Pancreas (tissue), 10 donors: ENCODE measurements at regions of chr1 and their contacts with region 1.

Region 1: GRCh38 chr1:28208818-28209441 is 23.9 kb downstream of the DNAJC8 start:
- DNase-seq: peak in 3 of 6 donors; percentile 25 to 50 (median 42)
- ATAC-seq: peak; percentile 69 to 94 (median 92)
- H3K4me3 ChIP-seq: no peak overlapping the region
- H3K27ac ChIP-seq: no peak overlapping the region
- H3K4me1 ChIP-seq: peaks cover 0 to 4% (median 0%) of the 10 kb centered on the region in 3 donors
- H3K27me3 ChIP-seq: no peaks in the 10 kb centered on the region
- CTCF ChIP-seq: peak in 3 of 4 donors; percentile 8 to 35 (median 23)

Region 2: GRCh38 chr1:28078680-28079626 is 130.0 kb before region 1 on chr1:
- intact Hi-C with region 1: no loop called
- DNase-seq: no peak
- ATAC-seq: peak; percentile 53 to 77 (median 64)
- H3K4me3 ChIP-seq: no peak overlapping the region
- H3K27ac ChIP-seq: peak overlapping the region in 2 of 4 donors; percentile 53 to 61
- H3K4me1 ChIP-seq: peaks cover 6 to 15% (median 10%) of the 10 kb centered on the region in 3 donors
- H3K27me3 ChIP-seq: no peaks in the 10 kb centered on the region
- CTCF ChIP-seq: no peak

Region 3: GRCh38 chr1:28104866-28105467 is 104.0 kb before region 1 on chr1:
- intact Hi-C with region 1: loop called in 1 of 3 experiments (anchors 10 kb)
- DNase-seq: peak; percentile 62 to 81 (median 68)
- ATAC-seq: peak; percentile 98 to 100 (median 99)
- H3K4me3 ChIP-seq: peak overlapping the region in 3 of 4 donors; percentile 7 to 31 (median 23)
- H3K27ac ChIP-seq: peak overlapping the region in 3 of 4 donors; percentile 18 to 65 (median 57)
- H3K4me1 ChIP-seq: no peaks in the 10 kb centered on the region
- H3K27me3 ChIP-seq: no peaks in the 10 kb centered on the region
- CTCF ChIP-seq: no peak